Heart right ventricle (tissue), 16 donors: ENCODE measurements at regions of chr4 and their contacts with region 1.

Region 1: DNA sequence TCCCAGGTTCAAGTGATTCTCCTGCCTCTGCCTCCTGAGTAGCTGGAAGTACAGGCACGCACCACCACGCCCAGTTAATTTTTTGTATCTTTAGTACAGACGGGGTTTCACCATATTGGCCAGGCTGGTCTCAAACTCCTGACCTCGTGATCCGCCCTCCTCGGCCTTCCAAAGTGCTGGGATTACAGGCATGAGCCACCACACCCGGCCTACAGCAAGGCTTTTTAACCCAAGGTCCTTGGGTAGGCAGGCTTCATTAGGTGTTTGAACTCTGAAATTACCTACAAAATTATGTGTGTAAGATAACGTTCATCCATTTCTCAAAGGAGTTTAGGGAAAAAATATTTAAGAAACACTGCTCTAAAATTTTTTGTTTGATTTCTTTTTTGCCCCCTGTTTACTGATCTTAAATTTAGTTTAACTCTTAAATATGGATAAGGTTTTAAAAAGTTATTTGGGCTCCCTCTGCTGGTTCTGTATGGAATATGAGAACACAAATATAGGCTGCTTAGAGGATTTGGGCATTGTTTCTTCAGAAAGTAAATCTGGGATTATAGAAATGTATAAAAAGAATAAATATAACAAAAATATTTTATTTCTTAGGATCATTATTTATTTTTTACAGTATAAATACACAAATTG is 92.8 kb downstream of the CBR4 start:
- DNase-seq: no peak
- ATAC-seq: peak in 1 of 8 donors; percentile 28
- H3K4me3 ChIP-seq: no peak overlapping the region
- H3K27ac ChIP-seq: peak overlapping the region in 1 of 10 donors; percentile 20
- H3K4me1 ChIP-seq: peaks cover 0 to 28% (median 7%) of the 10 kb centered on the region in 9 donors
- H3K27me3 ChIP-seq: no peaks in the 10 kb centered on the region
- CTCF ChIP-seq: peak; percentile 16 to 75 (median 67)

Region 2: GRCh38 chr4:168361365-168362024 is 555.8 kb before region 1 on chr4:
- intact Hi-C with region 1: no loop called
- DNase-seq: no peak
- ATAC-seq: peak in 1 of 8 donors; percentile 30
- H3K4me3 ChIP-seq: no peak overlapping the region
- H3K27ac ChIP-seq: no peak overlapping the region
- H3K4me1 ChIP-seq: no peaks in the 10 kb centered on the region
- H3K27me3 ChIP-seq: no peaks in the 10 kb centered on the region
- CTCF ChIP-seq: no peak

Region 3: DNA sequence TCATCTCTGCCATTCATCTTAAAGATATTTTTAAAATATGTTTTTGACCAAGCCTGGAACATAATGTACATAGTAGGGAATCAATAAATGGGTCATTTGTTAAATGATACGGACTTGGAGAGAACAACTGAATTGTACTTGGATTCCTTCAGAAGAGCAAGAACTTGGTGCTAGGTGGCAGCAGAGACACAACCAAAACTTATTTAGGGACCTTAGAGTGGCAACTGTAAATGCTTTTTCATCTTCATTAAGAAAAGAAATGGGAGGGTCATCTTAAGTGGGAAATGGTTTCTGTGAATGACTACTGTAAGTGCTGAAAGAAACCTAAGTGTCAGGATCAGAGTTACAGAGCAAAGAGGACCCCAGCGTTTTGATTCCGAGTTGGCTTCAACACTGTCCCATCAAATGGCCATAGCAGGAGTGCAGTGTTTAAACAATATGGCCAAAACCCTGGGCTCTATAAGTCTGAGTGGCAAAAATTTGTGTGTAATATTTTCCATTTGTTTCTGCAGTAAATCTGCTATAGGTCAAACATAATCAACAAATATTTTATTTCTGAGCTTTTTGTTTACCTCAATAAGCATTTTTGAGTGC is 206.8 kb before region 1 on chr4:
- intact Hi-C with region 1: loop called (anchors 2 to 5 kb)
- DNase-seq: peak in 1 of 2 donors; percentile 36
- ATAC-seq: peak in 7 of 8 donors; percentile 49 to 78 (median 65)
- H3K4me3 ChIP-seq: no peak overlapping the region
- H3K27ac ChIP-seq: peak overlapping the region in 6 of 10 donors; percentile 44 to 77 (median 62)
- H3K4me1 ChIP-seq: peaks cover 8 to 30% (median 22%) of the 10 kb centered on the region in 9 donors
- H3K27me3 ChIP-seq: no peaks in the 10 kb centered on the region
- CTCF ChIP-seq: peak; percentile 30 to 76 (median 61)